ENCODE measurements at regions of chr3 and their contacts with region 1.

Region 1: GRCh38 chr3:197828-198491 is 1.4 kb downstream of the CHL1 start:
- DNase-seq: no peak
- ATAC-seq: peak; percentile 65
- H3K4me3 ChIP-seq: 0 out of 2 replicates have a peak overlapping the region, but pooled peaks have one; percentile 9
- H3K27ac ChIP-seq: no peak overlapping the region
- H3K4me1 ChIP-seq: no peaks in the 10 kb centered on the region
- H3K27me3 ChIP-seq: peaks cover 0 to 5% of the 10 kb centered on the region in 2 experiments; a peak in 2 of 4 replicates
- CTCF ChIP-seq: no peak
- EP300 ChIP-seq: no peak
- POLR2A ChIP-seq: no peak
- RAD21 ChIP-seq: no peak

Region 2: GRCh38 chr3:173886-174285 is 24.1 kb before region 1 on chr3:
- CTCF ChIA-PET with region 1: interaction called, 3 read pairs
- POLR2A ChIA-PET with region 1: no interaction called
- RAD21 ChIA-PET with region 1: no interaction called
- SMC1A ChIA-PET with region 1: interaction called, 22 read pairs
- in situ Hi-C with region 1: no loop called
- intact Hi-C with region 1: no loop called
- DNase-seq: peak; percentile 8
- ATAC-seq: peak; percentile 93
- H3K4me3 ChIP-seq: no peak overlapping the region
- H3K27ac ChIP-seq: no peak overlapping the region
- H3K4me1 ChIP-seq: no peaks in the 10 kb centered on the region
- H3K27me3 ChIP-seq: no peaks in the 10 kb centered on the region
- CTCF ChIP-seq: no peak
- EP300 ChIP-seq: no peak
- POLR2A ChIP-seq: no peak
- RAD21 ChIP-seq: no peak

Region 3: GRCh38 chr3:184983-185382 is 13.0 kb before region 1 on chr3:
- CTCF ChIA-PET with region 1: interaction called, 25 read pairs
- POLR2A ChIA-PET with region 1: interaction called, 4 read pairs
- RAD21 ChIA-PET with region 1: interaction called, 13 read pairs
- SMC1A ChIA-PET with region 1: interaction called, 48 read pairs
- in situ Hi-C with region 1: no loop called
- intact Hi-C with region 1: no loop called
- DNase-seq: no peak
- ATAC-seq: no peak
- H3K4me3 ChIP-seq: no peak overlapping the region
- H3K27ac ChIP-seq: no peak overlapping the region
- H3K4me1 ChIP-seq: no peaks in the 10 kb centered on the region
- H3K27me3 ChIP-seq: no peaks in the 10 kb centered on the region
- CTCF ChIP-seq: no peak
- EP300 ChIP-seq: no peak
- POLR2A ChIP-seq: no peak
- RAD21 ChIP-seq: no peak

Measured in GM12878 (cell line).